Calu3 (cell line): ENCODE measurements at regions of chr7 and their contacts with region 1.

Region 1: GRCh38 chr7:128425850-128426249 is 16.1 kb upstream of the IMPDH1 start:
- DNase-seq: peak; percentile 80
- H3K4me3 Mint-ChIP-seq: no peak overlapping the region
- H3K27ac Mint-ChIP-seq: no peak overlapping the region
- H3K4me1 Mint-ChIP-seq: peaks cover 7% of the 10 kb centered on the region
- H3K27me3 Mint-ChIP-seq: no peaks in the 10 kb centered on the region
- CTCF ChIP-seq: peak; percentile 84

Region 2: GRCh38 chr7:128304212-128304611 is 121.6 kb before region 1 on chr7:
- CTCF ChIA-PET with region 1: no interaction called
- intact Hi-C with region 1: no loop called
- DNase-seq: no peak
- H3K4me3 Mint-ChIP-seq: no peak overlapping the region
- H3K27ac Mint-ChIP-seq: no peak overlapping the region
- H3K4me1 Mint-ChIP-seq: no peaks in the 10 kb centered on the region
- H3K27me3 Mint-ChIP-seq: no peaks in the 10 kb centered on the region
- CTCF ChIP-seq: no peak

Region 3: DNA sequence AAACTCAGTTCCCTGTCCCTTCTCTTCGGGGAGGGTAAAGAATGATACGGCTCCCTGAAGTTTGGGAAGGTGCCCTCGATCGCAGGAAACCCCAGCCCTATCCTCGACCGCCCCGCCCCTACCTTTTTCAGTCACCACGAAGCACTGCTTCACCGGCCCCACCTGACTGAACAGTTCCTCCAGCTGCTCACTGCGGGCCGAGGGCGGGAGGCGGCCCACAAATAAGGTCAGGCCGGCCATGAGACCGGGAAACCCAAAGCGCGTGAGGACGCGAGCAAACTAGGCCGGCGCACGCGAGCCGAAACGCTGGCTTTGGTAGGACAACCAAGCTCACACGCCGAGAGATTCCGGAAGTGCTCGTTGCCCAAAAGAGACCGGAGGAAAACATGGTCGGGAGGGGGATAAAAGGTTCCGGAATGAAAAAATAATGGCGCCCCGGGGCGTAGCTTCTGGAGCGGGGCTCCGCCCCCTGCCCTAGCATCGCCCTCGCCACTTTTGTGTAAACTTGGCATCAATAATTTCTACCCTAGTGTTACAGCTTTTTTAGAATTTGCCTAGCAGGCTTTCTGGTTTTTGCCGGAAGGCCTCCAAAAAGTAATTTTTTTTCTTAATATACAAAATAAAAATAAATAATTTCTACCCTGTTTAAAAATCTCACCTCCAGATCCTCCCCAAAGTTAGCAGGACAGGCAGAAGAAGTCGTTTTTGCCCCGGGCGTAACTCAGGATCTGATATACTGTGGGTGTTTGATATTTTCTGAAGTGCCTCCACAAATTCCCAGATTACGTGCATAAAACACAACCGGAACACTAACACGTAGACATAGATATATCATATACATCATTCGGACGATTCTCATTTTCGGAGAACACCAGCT is 82.1 kb before region 1 on chr7 and contains the start of gene RBM28:
- CTCF ChIA-PET with region 1: interaction called, 21 read pairs
- intact Hi-C with region 1: no loop called
- DNase-seq: peak; percentile 86
- H3K4me3 Mint-ChIP-seq: peak within 1 kb of the TSS; percentile 66
- H3K27ac Mint-ChIP-seq: peak within 1 kb of the TSS; percentile 88
- H3K4me1 Mint-ChIP-seq: peaks cover 10% of the 10 kb centered on the region
- H3K27me3 Mint-ChIP-seq: peaks cover 19% of the 10 kb centered on the region
- CTCF ChIP-seq: no peak
- total RNA-seq, gene RBM28: 49.3 and 49.9 TPM in 2 replicates

Region 4: GRCh38 chr7:128398016-128398840 is 27.6 kb before region 1 on chr7:
- CTCF ChIA-PET with region 1: interaction called, 7 read pairs
- intact Hi-C with region 1: loop called (anchors 1 kb)
- DNase-seq: peak; percentile 67
- H3K4me3 Mint-ChIP-seq: no peak overlapping the region
- H3K27ac Mint-ChIP-seq: no peak overlapping the region
- H3K4me1 Mint-ChIP-seq: no peaks in the 10 kb centered on the region
- H3K27me3 Mint-ChIP-seq: no peaks in the 10 kb centered on the region
- CTCF ChIP-seq: peak; percentile 92

Region 5: GRCh38 chr7:128455551-128456254 is 29.9 kb after region 1 on chr7 and contains the start of gene HILPDA:
- CTCF ChIA-PET with region 1: interaction called, 63 read pairs
- intact Hi-C with region 1: loop called (anchors 1 kb)
- DNase-seq: peak; percentile 90
- H3K4me3 Mint-ChIP-seq: peak within 1 kb of the TSS; percentile 95
- H3K27ac Mint-ChIP-seq: peak within 1 kb of the TSS; percentile 78
- H3K4me1 Mint-ChIP-seq: peaks cover 41% of the 10 kb centered on the region
- H3K27me3 Mint-ChIP-seq: peaks cover 14% of the 10 kb centered on the region
- CTCF ChIP-seq: no peak
- total RNA-seq, gene HILPDA: 14.5 and 17.4 TPM in 2 replicates

Region 6: DNA sequence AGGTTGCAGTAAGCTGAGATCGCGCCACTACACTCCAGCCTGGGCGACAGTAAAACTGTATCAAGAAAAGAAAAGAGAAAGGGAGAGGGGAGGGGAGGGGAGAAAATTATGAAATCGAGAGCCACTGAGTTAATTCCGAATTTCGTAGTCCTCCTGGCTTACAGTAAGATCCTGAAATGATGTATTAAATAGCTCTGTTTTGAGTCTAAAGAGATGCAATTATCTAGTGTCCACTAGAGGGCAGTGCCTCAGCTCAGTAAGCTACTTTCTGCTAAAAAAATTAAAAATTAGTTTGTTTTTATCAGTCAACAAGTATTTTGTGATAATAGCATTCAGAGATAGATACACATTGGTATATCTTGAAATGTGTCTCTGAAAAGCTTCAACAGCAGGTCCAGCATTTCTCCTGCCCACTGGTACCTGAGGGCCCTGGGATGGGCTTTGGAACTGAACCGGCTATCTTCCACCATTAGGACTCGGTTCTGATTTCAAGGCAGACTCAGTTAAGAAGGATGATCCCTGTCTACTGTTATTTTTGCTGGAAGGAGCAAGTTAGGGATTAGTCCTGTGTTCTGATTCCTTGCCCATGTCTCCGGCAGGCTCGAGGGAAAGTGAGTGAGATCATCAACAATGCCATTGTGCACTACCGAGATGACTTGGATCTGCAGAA is 738.2 kb after region 1 on chr7:
- CTCF ChIA-PET with region 1: no interaction called
- intact Hi-C with region 1: no loop called
- DNase-seq: no peak
- H3K4me3 Mint-ChIP-seq: no peak overlapping the region
- H3K27ac Mint-ChIP-seq: no peak overlapping the region
- H3K4me1 Mint-ChIP-seq: no peaks in the 10 kb centered on the region
- H3K27me3 Mint-ChIP-seq: no peaks in the 10 kb centered on the region
- CTCF ChIP-seq: peak; percentile 56